Heart right ventricle (tissue), 16 donors: ENCODE measurements at regions of chr19 and their contacts with region 1.

Region 1: DNA sequence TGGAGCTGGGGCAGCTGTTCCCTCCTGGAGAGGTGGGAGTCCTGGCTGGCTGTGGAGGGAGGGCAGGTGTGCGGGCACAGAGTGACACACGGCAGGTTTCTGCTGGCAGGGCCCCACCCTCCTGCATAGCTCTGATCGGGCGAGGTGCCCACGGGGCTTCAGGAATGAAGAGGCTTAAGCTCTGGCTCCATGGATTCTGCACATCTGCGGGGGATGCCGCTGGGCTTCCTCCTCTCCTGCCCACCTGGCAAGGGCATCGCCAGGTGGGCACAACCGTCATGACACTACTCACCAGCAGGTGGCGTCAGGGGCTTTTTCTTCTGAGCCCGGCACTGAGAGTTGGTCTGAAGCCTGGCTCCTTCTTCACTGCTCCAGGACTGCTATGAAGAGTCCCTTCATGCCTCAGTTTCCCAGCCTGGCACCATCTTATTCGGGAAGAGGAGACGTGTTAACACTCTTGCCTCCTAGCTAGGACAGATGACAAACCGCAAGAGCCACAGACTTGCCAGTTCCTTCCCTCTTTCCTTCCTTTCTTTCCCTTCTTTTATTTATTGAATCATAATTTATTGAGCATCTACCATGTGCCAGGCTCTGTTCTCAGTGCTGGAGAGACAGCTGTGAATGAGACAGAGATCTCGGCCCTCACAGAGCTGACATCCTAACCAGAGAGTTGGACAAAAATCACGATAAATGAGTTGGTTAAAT is 15.2 kb upstream of the PAK4 start:
- DNase-seq: peak; percentile 48 to 51
- ATAC-seq: peak in 5 of 8 donors; percentile 46 to 69 (median 54)
- H3K4me3 ChIP-seq: no peak overlapping the region
- H3K27ac ChIP-seq: no peak overlapping the region
- H3K4me1 ChIP-seq: no peaks in the 10 kb centered on the region
- H3K27me3 ChIP-seq: peaks cover 0 to 73% (median 55%) of the 10 kb centered on the region in 7 donors
- CTCF ChIP-seq: peak; percentile 37 to 86 (median 72)

Region 2: DNA sequence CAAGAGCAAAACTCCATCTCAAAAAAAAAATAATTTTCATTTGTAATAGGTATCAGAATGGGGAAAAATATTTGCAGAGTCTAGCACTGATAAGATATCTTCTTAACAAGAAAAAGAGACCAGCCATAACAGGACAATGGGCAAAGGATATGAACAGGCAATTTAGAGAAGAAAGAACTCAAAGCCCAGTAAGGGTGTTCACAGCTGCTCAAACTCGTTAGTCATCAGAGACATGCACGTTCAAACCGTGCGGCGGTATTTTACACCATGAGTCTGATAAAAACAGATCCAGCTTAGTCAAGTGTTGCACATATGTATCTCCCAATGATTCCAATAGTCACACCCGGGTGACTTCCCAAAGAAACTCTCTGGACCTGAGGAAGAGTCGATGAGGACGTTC is 72.7 kb after region 1 on chr19:
- intact Hi-C with region 1: no loop called
- DNase-seq: no peak
- ATAC-seq: no peak
- H3K4me3 ChIP-seq: no peak overlapping the region
- H3K27ac ChIP-seq: no peak overlapping the region
- H3K4me1 ChIP-seq: no peaks in the 10 kb centered on the region
- H3K27me3 ChIP-seq: peaks cover 0 to 14% (median 7%) of the 10 kb centered on the region in 7 donors
- CTCF ChIP-seq: no peak

Region 3: DNA sequence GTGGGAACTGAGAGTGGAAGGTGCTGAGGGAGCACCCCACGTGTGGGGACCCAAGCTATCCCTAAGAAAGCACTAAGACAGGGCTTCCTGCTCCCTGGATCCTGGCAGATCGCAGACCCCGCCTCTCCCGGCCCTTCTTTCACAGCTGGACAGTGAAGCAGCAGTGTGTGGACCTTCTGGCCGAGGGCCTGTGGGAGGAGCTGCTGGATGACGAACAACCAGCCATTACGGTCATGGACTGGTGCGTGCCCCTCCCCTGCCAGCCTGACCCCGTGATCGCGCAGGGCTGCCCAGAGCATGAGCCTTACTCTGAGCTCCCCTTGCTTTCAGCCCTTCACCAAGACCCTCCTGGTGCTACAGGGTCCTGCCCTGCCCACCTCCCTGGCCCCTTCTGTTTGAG is 88.6 kb after region 1 on chr19:
- intact Hi-C with region 1: loop called in 1 of 10 experiments (anchors 10 kb)
- DNase-seq: no peak
- ATAC-seq: peak in 3 of 8 donors; percentile 52 to 58 (median 56)
- H3K4me3 ChIP-seq: no peak overlapping the region
- H3K27ac ChIP-seq: no peak overlapping the region
- H3K4me1 ChIP-seq: peaks cover 0 to 5% (median 0%) of the 10 kb centered on the region in 9 donors
- H3K27me3 ChIP-seq: peaks cover 15 to 99% (median 97%) of the 10 kb centered on the region in 7 donors
- CTCF ChIP-seq: no peak

Region 4: DNA sequence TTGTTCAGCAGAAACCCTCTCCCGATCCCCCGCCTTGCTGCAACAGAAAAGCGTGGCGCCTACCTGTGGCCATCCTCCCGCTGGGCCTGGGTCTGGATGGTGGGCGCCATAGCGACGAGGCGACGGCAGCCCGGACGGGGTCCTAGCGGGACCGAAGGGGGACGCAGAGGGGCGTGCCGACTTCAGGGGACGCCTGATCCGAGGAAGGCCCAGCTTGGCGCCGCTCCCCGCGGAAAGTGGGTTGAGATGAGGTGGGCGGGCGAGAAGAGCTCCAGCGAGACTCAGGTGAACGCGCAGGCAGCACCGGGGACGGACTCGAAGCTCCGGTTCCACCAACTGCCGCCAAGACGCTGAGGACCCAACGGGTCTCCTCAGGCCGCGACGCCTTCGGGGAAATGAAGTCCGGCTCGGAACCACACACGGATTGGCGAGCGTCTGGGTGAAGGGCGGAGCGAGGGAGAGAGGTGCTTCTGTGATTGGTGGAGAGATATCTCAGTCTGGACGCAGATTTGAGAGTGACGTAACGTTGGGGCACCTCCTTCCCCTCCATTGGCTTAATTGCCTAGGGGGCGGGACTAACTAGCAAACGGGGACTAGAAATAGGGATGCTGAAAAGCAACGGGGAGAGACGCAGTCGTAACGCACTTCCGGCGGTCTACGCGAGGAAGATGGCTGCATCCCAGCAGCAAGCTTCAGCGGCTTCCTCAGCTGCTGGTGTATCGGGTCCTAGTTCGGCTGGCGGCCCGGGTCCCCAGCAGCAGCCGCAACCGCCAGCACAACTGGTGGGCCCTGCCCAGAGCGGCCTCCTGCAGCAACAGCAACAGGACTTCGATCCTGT is 280.6 kb after region 1 on chr19 and contains the starts of genes MED29 and PAF1:
- intact Hi-C with region 1: no loop called
- DNase-seq: peak; percentile 94 to 99
- ATAC-seq: peak; percentile 94 to 98 (median 96)
- H3K4me3 ChIP-seq: peak within 1 kb of the TSS; percentile 66 to 99 (median 94)
- H3K27ac ChIP-seq: peak within 1 kb of the TSS; percentile 94 to 100 (median 98)
- H3K4me1 ChIP-seq: peaks cover 12 to 27% (median 24%) of the 10 kb centered on the region in 9 donors
- H3K27me3 ChIP-seq: no peaks in the 10 kb centered on the region
- CTCF ChIP-seq: peak in 2 of 9 donors; percentile 4 to 16
- total RNA-seq, gene MED29: 22.9 to 32.3 (median 27.1) TPM
- total RNA-seq, gene PAF1: 34.3 to 46.4 (median 38.8) TPM